Mucosa of descending colon (tissue), 3 donors: ENCODE measurements at regions of chr6 and their contacts with region 1.

Region 1: GRCh38 chr6:122184401-122184827 is 215.0 kb upstream of the HSF2 start:
- DNase-seq: no peak
- ATAC-seq: no peak
- H3K4me3 ChIP-seq: no peak overlapping the region
- H3K4me1 ChIP-seq: no peaks in the 10 kb centered on the region
- CTCF ChIP-seq: no peak

Region 2: GRCh38 chr6:121413879-121414278 is 770.5 kb before region 1 on chr6:
- intact Hi-C with region 1: loop called in 1 of 2 experiments (anchors 10 kb)
- DNase-seq: no peak
- ATAC-seq: no peak
- H3K4me3 ChIP-seq: no peak overlapping the region
- H3K4me1 ChIP-seq: no peaks in the 10 kb centered on the region
- CTCF ChIP-seq: no peak